ENCODE measurements at regions of chr17 and their contacts with region 1.

Region 1: DNA sequence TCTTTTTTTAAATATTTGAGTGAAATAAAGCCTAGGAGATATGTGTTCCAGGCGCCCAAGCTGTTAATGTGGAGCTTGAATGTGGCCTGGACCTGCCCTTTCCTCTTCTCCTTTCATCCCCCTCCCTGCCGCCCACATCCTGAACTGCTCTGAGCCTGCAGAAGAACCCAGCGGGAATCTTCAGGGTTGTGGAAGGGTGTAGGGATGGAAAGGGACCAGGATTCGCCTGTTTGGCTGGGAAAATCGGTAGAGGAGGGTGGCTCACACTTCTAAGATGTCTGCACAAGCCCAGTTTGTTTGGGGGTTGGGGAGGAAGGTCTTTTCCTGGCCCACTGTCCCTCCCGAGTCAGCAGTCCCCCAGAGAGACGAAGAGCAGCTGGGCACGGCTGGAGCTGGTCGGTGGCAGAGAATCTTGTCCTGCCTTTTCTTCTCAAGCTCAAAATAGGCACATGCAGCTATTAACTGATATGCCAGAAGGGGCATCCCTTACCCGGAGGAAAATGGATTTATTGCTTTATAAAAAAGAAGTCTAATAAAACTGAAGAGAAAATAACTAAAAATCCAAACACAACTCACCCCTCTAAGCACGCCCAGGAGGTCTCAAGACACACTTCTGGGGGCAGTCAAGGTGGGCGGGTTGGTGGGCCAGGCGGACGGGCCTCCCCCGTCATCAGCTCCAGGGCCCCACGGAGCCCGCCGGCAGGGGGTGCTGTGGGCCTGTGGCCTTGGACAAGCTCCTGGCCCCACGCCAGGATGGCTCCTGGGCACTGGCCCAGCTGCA is 11.5 kb upstream of the PITPNA start:
- DNase-seq: peak; percentile 88 to 97 (median 96)
- ATAC-seq: peak; percentile 64 to 69
- H3K4me3 ChIP-seq: no peak overlapping the region
- H3K27ac ChIP-seq: peak overlapping the region; percentile 43
- H3K4me1 ChIP-seq: no peaks in the 10 kb centered on the region
- H3K27me3 ChIP-seq: no peaks in the 10 kb centered on the region

Region 2: DNA sequence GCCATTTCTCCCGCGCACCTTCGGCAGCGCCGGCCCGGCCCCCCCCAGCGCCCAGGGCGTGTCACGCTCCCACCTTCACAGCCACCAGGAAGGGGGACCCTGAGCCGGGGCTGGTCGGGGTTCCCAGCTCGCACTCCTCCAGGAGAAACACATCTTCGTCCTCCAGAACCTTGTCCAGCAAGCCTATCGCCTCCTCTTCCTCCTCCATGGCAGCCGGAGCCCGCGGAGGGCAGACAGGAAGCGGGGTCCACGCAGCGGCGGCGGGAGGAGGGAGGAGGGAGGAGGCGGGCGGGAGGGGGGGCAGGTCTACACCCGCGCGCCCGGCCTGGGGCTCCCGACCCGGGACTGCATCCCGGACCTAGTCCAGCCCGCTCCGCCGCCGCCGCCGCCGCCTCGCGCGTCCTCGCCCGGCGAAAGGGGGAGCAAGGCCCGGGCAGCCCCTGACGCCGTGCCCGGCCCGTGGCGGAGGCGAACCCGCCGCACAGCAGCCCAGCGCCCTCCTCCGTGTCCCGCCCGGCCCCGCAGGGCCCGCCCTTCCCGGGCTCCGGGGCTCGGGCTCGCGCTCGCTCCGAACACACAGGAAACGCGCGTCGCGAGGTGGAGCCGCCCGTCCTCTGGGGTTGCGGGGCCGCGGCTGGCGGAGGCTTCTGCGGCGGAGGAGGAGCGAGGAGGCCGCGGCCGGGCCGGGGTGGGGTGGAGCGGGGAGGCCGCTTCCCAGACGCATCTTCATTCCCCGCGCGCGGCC is 465.1 kb before region 1 on chr17:
- intact Hi-C with region 1: no loop called
- DNase-seq: peak; percentile 73 to 91 (median 88)
- ATAC-seq: peak; percentile 38 to 48
- H3K4me3 ChIP-seq: peak overlapping the region; percentile 58
- H3K27ac ChIP-seq: peak overlapping the region; percentile 83
- H3K4me1 ChIP-seq: peaks cover 26% of the 10 kb centered on the region
- H3K27me3 ChIP-seq: no peaks in the 10 kb centered on the region

Region 3: GRCh38 chr17:1438593-1439083 is 135.5 kb before region 1 on chr17:
- intact Hi-C with region 1: no loop called
- DNase-seq: no peak
- ATAC-seq: no peak
- H3K4me3 ChIP-seq: no peak overlapping the region
- H3K27ac ChIP-seq: no peak overlapping the region
- H3K4me1 ChIP-seq: no peaks in the 10 kb centered on the region
- H3K27me3 ChIP-seq: no peaks in the 10 kb centered on the region

Region 4: DNA sequence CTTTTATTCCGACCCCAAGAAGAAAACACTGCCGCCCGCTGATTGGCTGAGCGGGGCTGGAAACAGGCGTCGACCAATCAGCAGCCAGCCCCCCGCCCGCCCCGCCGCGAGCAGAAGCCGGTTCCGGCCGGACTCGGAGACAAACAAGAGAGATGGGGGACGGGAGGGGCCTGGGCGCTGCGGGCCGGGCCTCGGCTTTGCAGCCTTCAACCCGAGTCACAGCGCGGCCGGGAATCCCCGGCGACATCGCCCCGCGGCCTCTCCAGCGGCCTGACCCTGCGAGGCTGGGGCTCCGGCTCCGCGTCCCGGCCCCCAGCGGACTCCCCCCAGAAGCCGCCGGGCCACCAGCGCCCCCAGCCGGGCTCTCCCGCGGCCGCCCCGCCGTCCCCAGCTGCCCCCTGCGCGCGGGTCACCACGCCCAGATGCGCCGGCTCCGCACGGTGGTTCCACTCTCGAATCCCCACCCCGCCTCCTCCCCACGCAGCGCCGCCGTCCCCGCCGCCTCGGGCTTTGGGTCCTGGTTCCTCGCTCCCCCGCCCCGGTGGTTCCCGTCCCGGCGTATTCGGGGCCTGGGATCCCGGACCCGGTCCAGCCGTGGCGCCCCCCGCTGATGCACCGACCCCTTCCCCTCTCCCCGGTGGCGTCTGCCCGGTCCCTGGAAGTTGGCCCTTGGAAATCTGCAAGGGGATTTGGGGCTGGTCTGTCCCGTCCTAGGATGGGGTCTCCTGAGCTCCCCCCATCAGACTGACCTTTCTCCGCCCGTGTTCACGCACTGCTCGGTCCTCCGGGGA is 54.9 kb after region 1 on chr17:
- intact Hi-C with region 1: loop called (anchors 2 to 5 kb)
- DNase-seq: peak; percentile 93 to 97 (median 97)
- ATAC-seq: peak; percentile 91
- H3K4me3 ChIP-seq: peak overlapping the region; percentile 76
- H3K27ac ChIP-seq: peak overlapping the region; percentile 63
- H3K4me1 ChIP-seq: peaks cover 1% of the 10 kb centered on the region
- H3K27me3 ChIP-seq: no peaks in the 10 kb centered on the region

Region 5: GRCh38 chr17:1648963-1649843 is 75.1 kb after region 1 on chr17:
- intact Hi-C with region 1: loop called in 2 of 4 experiments (anchors 5 kb)
- DNase-seq: peak; percentile 92 to 99 (median 99)
- ATAC-seq: peak; percentile 77 to 79
- H3K4me3 ChIP-seq: peak overlapping the region; percentile 76
- H3K27ac ChIP-seq: peak overlapping the region; percentile 94
- H3K4me1 ChIP-seq: peaks cover 5% of the 10 kb centered on the region
- H3K27me3 ChIP-seq: no peaks in the 10 kb centered on the region

Region 6: DNA sequence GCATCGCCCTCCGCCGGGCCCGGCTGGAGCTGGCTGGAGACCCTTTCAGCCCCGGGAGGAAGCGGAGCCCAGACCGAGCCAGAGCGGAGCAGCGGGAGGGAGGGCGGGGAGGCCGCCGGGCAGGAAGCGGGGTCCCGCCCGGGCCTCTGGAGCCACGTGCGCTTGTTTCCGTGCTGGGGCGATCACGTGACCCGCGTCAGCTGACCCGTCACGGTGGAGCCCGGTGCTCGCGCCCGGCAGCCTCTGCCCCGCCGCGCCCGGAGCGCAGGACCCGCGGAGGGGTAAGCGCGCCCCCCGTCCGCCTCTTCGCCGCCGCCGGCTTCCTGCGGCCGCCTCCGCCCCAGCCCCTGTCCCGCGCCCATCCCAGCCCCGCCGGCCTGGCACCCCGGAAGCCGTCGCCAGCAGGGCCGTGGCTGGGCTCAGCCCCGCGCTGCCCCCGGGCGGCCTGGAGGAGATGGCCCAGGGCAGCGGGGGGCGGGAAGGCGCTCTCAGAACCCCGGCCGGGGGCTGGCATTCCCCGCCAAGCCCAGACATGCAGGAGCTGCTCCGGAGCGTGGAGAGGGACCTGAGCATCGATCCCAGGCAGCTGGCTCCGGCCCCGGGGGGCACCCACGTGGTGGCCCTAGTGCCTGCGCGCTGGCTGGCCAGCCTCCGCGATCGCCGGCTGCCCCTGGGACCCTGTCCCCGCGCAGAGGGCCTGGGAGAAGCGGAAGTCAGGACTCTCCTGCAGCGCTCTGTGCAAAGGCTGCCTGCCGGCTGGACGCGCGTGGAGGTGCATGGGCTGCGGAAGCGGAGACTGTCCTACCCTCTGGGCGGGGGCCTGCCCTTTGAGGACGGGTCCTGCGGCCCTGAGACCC is 150.6 kb after region 1 on chr17 and contains the start of gene WDR81:
- intact Hi-C with region 1: no loop called
- DNase-seq: peak; percentile 95 to 98 (median 97)
- ATAC-seq: peak; percentile 84 to 89
- H3K4me3 ChIP-seq: peak within 1 kb of the TSS; percentile 74
- H3K27ac ChIP-seq: peak within 1 kb of the TSS; percentile 95
- H3K4me1 ChIP-seq: peaks cover 9% of the 10 kb centered on the region
- H3K27me3 ChIP-seq: no peaks in the 10 kb centered on the region
- total RNA-seq, gene WDR81: 9.2 to 11.2 (median 11.0) TPM

Region 7: DNA sequence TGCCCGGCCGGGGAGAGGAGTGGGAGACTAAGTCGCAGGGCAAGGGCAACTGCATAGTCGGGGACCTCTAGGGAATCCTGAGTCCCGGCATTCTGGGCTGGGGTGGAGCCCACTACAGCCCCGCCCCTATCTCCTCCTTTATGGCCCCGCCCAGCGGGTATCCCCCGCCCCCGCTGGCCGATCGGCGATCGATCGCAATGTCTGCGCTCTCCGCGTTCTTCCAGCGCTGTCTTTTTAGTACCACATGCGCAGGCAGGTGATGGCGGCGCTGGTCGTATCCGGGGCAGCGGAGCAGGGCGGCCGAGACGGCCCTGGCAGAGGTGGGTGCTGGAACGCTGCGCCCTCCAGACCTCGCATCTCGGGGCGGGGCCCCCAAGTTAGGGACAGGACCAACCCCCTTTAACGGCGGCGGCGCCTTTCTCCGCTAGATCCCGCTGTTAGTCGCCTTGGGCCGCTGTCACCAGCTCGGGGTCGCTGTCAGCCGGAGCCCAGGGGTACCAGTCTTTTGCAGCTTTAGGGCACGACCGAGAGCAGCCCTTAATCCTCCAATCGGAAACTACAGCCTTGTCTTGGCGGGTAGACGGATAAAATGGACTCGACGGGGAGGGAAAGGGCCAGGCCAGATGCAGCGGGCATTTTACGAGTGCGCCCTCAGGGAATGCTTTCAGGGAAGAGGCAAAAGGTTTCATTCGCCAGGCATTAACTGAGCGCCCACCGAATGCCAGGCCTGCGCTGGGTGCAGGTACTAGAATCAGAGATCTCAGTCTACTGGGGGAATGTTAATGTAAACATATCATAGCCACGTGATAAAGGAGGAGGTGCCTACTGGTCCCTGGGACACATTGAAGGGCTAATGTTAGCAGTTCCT is 456.0 kb after region 1 on chr17 and contains the start of gene DPH1:
- intact Hi-C with region 1: loop called in 1 of 4 experiments (anchors 5 kb)
- DNase-seq: peak; percentile 91 to 96 (median 96)
- ATAC-seq: peak; percentile 87 to 90
- H3K4me3 ChIP-seq: peak within 1 kb of the TSS; percentile 67
- H3K27ac ChIP-seq: peak within 1 kb of the TSS; percentile 17
- H3K4me1 ChIP-seq: peaks cover 2% of the 10 kb centered on the region
- H3K27me3 ChIP-seq: no peaks in the 10 kb centered on the region
- total RNA-seq, gene DPH1: 24.7 to 30.7 (median 27.5) TPM